ENCODE measurements at regions of chr1 and their contacts with region 1.

Region 1: GRCh38 chr1:147545133-147545532 is 3.8 kb downstream of the BCL9 start:
- DNase-seq: peak; percentile 80 to 92
- ATAC-seq: peak; percentile 74 to 87 (median 84)
- H3K4me3 ChIP-seq: no peak overlapping the region
- H3K4me3 Mint-ChIP-seq: peak overlapping the region; percentile 87
- H3K27ac ChIP-seq: no peak overlapping the region
- H3K27ac Mint-ChIP-seq: peak overlapping the region; percentile 80 to 84
- H3K4me1 ChIP-seq: peaks cover 42% of the 10 kb centered on the region
- H3K4me1 Mint-ChIP-seq: peaks cover 34 to 39% of the 10 kb centered on the region in 2 donors
- H3K27me3 ChIP-seq: peaks cover 12% of the 10 kb centered on the region
- H3K27me3 Mint-ChIP-seq: peaks cover 11 to 15% of the 10 kb centered on the region in 2 donors
- CTCF ChIP-seq: no peak

Region 2: DNA sequence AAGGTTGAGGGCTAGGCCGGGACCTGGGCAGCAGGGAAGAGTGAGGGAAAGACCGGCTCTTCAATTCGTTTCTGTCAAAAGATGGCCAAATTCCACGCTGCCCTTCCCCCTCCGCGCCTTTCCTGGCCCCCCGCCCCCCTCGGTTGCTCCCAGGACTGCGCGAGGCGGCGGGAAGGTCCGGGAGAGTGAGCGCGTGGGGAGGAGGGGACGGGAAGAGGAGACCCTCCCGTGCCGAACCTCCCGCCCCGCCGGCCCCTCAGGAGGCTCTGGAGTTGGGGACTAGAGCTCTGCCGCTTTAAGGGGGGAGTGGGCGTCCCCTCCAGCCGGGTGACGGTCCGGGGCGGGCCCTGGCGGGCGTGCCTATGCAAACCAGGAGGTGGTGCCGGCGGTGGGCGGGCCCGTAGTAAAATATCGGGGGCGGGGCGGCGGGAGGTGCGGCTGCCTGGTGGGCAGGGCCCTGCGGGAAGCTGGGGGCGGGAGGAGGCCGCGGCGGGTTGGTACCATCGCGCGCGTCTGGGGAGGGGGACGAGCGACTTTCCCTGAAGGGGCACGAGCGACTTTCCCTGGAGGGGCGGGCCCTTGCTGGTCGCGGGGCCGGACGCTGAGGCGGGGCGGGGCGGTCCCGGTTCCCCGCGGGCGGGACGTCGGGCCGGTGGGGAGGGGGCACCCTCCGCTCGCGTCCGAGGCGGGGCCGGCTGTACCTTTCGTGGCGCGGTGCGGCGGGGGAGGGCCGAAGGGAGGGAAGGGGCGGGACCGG is 54.4 kb after region 1 on chr1:
- intact Hi-C with region 1: loop called (anchors 1 kb)
- DNase-seq: peak; percentile 91 to 96
- ATAC-seq: peak; percentile 81 to 93 (median 83)
- H3K4me3 ChIP-seq: peak overlapping the region; percentile 66
- H3K4me3 Mint-ChIP-seq: peak overlapping the region; percentile 93
- H3K27ac ChIP-seq: peak overlapping the region; percentile 50
- H3K27ac Mint-ChIP-seq: peak overlapping the region; percentile 45 to 93
- H3K4me1 ChIP-seq: peaks cover 18% of the 10 kb centered on the region
- H3K4me1 Mint-ChIP-seq: peaks cover 22 to 24% of the 10 kb centered on the region in 2 donors
- H3K27me3 ChIP-seq: peaks cover 4% of the 10 kb centered on the region
- H3K27me3 Mint-ChIP-seq: no peaks in the 10 kb centered on the region
- CTCF ChIP-seq: no peak

Region 3: DNA sequence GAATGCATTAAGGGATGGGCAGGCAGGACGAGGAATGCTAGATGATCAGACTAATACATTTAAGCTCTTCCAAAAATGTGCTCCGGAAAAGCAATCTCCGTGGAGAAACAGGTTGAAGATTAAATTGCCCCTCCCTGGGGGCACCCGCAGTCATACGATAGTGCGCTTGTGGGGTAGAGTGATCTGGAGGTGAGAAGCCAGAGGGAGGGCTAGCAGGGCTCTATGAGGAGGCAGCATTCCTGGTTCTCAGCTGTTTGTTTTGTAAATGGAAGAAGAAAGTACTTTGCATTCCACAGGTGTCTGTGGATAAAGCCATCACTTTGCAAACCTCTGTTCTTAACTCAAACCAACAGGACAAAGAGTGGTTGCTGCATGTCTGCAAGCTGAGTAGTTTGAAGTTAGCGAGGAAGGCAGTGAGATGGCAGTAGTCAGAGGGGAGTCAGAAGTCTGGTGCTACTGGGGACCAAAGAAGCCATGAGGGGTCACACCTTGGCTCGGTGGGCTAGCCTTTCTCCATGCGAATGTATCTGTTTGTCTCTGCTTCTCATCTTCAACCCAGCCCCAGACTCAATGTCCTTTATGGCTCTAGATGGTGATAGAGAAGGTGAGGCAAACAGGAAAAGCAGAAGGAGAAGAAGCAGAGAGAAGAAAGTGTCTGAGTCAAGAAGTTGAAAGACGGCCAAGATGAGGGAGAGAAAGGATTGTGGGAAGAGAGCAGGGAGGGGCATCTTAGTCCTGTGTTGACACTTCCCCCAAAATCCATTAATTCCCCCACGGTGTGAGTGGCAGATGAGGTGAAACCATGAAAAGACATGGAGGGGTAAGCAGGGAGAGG is 292.2 kb after region 1 on chr1:
- intact Hi-C with region 1: no loop called
- DNase-seq: no peak
- ATAC-seq: no peak
- H3K4me3 ChIP-seq: no peak overlapping the region
- H3K4me3 Mint-ChIP-seq: no peak overlapping the region
- H3K27ac ChIP-seq: no peak overlapping the region
- H3K27ac Mint-ChIP-seq: no peak overlapping the region
- H3K4me1 ChIP-seq: no peaks in the 10 kb centered on the region
- H3K4me1 Mint-ChIP-seq: no peaks in the 10 kb centered on the region
- H3K27me3 ChIP-seq: peaks cover 2% of the 10 kb centered on the region
- H3K27me3 Mint-ChIP-seq: peaks cover 28 to 50% of the 10 kb centered on the region in 2 donors
- CTCF ChIP-seq: no peak